H1 (cell line): ENCODE measurements at regions of chr6 and their contacts with region 1.

Region 1: GRCh38 chr6:68967549-68968300 is 332.6 kb downstream of the ADGRB3 start:
- DNase-seq: peak in 1 of 2 experiments; percentile 74
- H3K4me3 ChIP-seq: no peak overlapping the region
- H3K27ac ChIP-seq: no peak overlapping the region
- H3K4me1 ChIP-seq: no peaks in the 10 kb centered on the region
- H3K27me3 ChIP-seq: no peaks in the 10 kb centered on the region
- CTCF ChIP-seq: peak; percentile 43 to 82 (median 77)
- EP300 ChIP-seq: no peak
- POLR2A ChIP-seq: no peak
- RAD21 ChIP-seq: peak; percentile 82 to 86

Region 2: GRCh38 chr6:68838571-68838970 is 129.2 kb before region 1 on chr6:
- CTCF ChIA-PET with region 1: interaction called, 15 read pairs
- POLR2A ChIA-PET with region 1: no interaction called
- DNase-seq: no peak
- H3K4me3 ChIP-seq: no peak overlapping the region
- H3K27ac ChIP-seq: no peak overlapping the region
- H3K4me1 ChIP-seq: no peaks in the 10 kb centered on the region
- H3K27me3 ChIP-seq: peaks cover 0 to 1% (median 0%) of the 10 kb centered on the region in 4 experiments; a peak in 1 of 7 replicates
- CTCF ChIP-seq: no peak
- EP300 ChIP-seq: no peak
- POLR2A ChIP-seq: no peak
- RAD21 ChIP-seq: no peak

Region 3: GRCh38 chr6:69044534-69044933 is 76.8 kb after region 1 on chr6:
- CTCF ChIA-PET with region 1: no interaction called
- POLR2A ChIA-PET with region 1: no interaction called
- DNase-seq: no peak
- H3K4me3 ChIP-seq: no peak overlapping the region
- H3K27ac ChIP-seq: no peak overlapping the region
- H3K4me1 ChIP-seq: no peaks in the 10 kb centered on the region
- H3K27me3 ChIP-seq: no peaks in the 10 kb centered on the region
- CTCF ChIP-seq: no peak
- EP300 ChIP-seq: no peak
- POLR2A ChIP-seq: no peak
- RAD21 ChIP-seq: no peak